Heart right ventricle (tissue), 16 donors: ENCODE measurements at regions of chr2 and their contacts with region 1.

Region 1: DNA sequence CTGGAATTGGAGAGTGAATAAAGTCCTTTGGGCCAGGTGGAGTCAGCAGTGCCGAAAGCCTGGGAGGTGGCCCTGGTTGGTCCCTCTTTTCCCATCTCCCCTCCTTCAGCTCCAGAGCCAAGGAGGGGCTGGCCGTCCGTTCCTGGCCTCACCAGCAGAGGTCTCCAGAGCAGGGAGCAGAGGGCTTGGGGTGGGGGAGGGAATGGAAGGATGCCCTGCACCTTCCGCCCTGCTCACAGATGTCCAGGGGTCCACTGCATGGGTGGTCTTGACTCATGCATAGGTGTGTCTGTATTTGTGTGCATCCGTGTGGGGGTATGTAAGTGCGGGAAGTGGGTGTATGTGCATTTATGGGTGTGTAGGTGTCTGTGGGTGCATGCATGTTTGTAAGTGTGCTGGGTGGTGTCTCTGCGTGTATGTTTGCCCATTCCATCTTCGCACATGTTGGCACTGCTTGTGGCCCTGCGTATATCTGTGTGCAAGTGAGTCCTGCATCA is 201.8 kb downstream of the ZFP36L2 start:
- DNase-seq: peak; percentile 77 to 78
- ATAC-seq: peak; percentile 45 to 80 (median 74)
- H3K4me3 ChIP-seq: no peak overlapping the region
- H3K27ac ChIP-seq: peak overlapping the region in 3 of 10 donors; percentile 9 to 31 (median 22)
- H3K4me1 ChIP-seq: peaks cover 7 to 43% (median 27%) of the 10 kb centered on the region in 9 donors
- H3K27me3 ChIP-seq: no peaks in the 10 kb centered on the region
- CTCF ChIP-seq: peak; percentile 58 to 88 (median 85)

Region 2: GRCh38 chr2:42974721-42975717 is 49.5 kb before region 1 on chr2:
- intact Hi-C with region 1: loop called in 8 of 10 experiments (anchors 5 to 10 kb)
- DNase-seq: peak; percentile 79 to 85
- ATAC-seq: peak; percentile 85 to 92 (median 88)
- H3K4me3 ChIP-seq: peak overlapping the region in 9 of 10 donors; percentile 16 to 61 (median 52)
- H3K27ac ChIP-seq: peak overlapping the region in 6 of 10 donors; percentile 59 to 81 (median 72)
- H3K4me1 ChIP-seq: peaks cover 12 to 32% (median 19%) of the 10 kb centered on the region in 9 donors
- H3K27me3 ChIP-seq: no peaks in the 10 kb centered on the region
- CTCF ChIP-seq: peak; percentile 86 to 97 (median 89)

Region 3: DNA sequence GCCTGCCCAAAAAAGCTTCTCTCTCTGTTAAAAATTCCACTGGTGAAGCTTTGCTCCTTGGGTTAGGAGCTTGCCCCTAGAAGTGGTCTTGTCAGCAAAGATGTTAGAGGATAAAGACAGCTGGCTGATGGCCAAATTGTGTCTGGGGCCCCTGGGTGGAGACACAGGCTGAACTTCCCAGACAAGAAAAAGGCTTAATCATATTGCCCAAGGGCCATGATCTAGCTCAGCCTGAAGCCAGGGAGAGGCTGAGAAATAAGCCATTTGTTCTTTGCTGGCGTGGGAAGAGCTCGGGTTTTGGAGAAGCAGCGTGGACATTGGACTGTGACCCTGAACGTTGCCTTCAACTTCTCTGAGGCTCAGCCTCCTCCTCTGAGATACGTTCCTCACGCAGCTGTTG is 48.8 kb after region 1 on chr2:
- intact Hi-C with region 1: no loop called
- DNase-seq: peak in 1 of 2 donors; percentile 41
- ATAC-seq: peak in 5 of 8 donors; percentile 6 to 54 (median 16)
- H3K4me3 ChIP-seq: no peak overlapping the region
- H3K27ac ChIP-seq: peak overlapping the region; percentile 37 to 95 (median 75)
- H3K4me1 ChIP-seq: peaks cover 51 to 90% (median 67%) of the 10 kb centered on the region in 9 donors
- H3K27me3 ChIP-seq: no peaks in the 10 kb centered on the region
- CTCF ChIP-seq: no peak

Region 4: DNA sequence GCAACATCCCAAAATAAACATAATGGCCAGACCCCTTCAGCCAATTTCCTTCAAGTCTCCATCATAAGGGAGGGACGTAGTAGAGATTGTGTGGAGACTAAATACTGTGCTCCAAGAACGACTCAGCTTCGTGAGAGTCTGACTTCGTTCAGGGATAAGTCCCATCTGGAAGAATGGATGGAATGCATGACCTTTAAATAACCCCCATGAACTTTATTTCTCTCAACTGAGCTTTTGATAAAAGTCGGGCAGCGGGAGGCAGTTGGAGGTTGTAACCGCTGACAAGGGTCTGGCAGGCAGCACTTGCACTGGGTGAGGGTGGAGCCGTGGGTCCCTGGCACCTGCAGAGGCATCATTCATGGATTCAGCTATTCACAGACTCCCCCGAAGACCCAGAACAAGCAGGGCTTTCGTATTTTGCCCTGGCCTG is 85.9 kb after region 1 on chr2:
- intact Hi-C with region 1: loop called in 2 of 10 experiments (anchors 5 to 10 kb)
- DNase-seq: peak; percentile 32 to 37
- ATAC-seq: peak; percentile 20 to 68 (median 42)
- H3K4me3 ChIP-seq: no peak overlapping the region
- H3K27ac ChIP-seq: peak overlapping the region in 9 of 10 donors; percentile 2 to 90 (median 55)
- H3K4me1 ChIP-seq: peaks cover 4 to 84% (median 68%) of the 10 kb centered on the region in 9 donors
- H3K27me3 ChIP-seq: no peaks in the 10 kb centered on the region
- CTCF ChIP-seq: no peak

Region 5: GRCh38 chr2:43131024-43131889 is 106.7 kb after region 1 on chr2:
- intact Hi-C with region 1: loop called in 4 of 10 experiments (anchors 5 to 10 kb)
- DNase-seq: peak; percentile 61 to 67
- ATAC-seq: peak; percentile 31 to 76 (median 52)
- H3K4me3 ChIP-seq: peak overlapping the region in 1 of 10 donors; percentile 10
- H3K27ac ChIP-seq: peak overlapping the region in 9 of 10 donors; percentile 20 to 89 (median 46)
- H3K4me1 ChIP-seq: peaks cover 19 to 99% (median 52%) of the 10 kb centered on the region in 9 donors
- H3K27me3 ChIP-seq: no peaks in the 10 kb centered on the region
- CTCF ChIP-seq: peak; percentile 25 to 64 (median 55)